ENCODE measurements at regions of chr2 and their contacts with region 1.

Region 1: DNA sequence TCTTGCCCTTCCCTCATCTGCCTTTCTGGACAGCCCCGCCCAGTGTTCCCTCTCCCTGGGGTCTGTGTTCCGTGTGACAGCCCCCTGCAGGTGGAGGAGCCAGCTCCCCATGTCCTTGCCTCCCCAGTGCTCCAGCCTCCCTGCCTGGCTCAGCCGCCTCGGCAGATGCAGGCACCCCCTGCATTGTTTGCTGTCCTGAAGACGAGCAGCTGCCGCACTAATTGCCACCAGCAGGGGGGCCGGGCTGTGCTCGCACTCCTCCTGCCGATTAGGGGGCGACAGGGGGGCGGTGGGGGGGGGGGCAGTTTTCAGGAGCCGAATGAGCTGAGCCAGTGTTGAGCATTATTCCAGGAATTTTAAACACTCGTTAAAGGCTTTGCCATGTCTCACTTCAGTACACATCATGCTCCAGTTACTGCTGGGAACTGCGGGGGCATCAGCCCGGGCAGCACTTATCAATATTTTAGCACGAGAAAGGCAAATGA is 23.3 kb downstream of the SIX3 start:
- DNase-seq: peak in 2 of 4 donors; percentile 40 to 48
- ATAC-seq: no peak
- H3K4me3 ChIP-seq: no peak overlapping the region
- H3K27ac ChIP-seq: no peak overlapping the region
- H3K4me1 ChIP-seq: no peaks in the 10 kb centered on the region
- H3K27me3 ChIP-seq: no peaks in the 10 kb centered on the region
- CTCF ChIP-seq: no peak
- POLR2A ChIP-seq: no peak

Region 2: DNA sequence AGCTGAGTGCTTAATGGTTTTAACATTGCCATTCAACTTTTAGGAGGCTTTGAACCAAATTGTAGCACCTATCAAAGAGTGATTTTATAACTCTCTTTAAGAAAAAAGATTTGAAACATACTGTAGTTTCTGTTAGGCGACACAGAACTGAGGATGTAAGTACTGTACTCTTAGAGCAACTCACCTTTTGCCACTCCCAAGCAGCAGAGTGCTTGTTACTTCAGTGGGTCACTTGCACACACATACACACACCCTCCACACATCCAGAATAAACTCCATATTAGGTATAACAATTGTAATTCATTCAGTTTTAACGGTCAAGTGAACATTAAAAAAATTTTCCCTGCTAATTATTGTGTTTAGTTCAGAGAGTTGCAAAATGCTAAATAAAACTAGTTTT is 484.7 kb before region 1 on chr2:
- intact Hi-C with region 1: loop called (anchors 10 kb)
- DNase-seq: no peak
- ATAC-seq: no peak
- H3K4me3 ChIP-seq: no peak overlapping the region
- H3K27ac ChIP-seq: no peak overlapping the region
- H3K4me1 ChIP-seq: no peaks in the 10 kb centered on the region
- H3K27me3 ChIP-seq: no peaks in the 10 kb centered on the region
- CTCF ChIP-seq: no peak
- POLR2A ChIP-seq: no peak

Region 3: DNA sequence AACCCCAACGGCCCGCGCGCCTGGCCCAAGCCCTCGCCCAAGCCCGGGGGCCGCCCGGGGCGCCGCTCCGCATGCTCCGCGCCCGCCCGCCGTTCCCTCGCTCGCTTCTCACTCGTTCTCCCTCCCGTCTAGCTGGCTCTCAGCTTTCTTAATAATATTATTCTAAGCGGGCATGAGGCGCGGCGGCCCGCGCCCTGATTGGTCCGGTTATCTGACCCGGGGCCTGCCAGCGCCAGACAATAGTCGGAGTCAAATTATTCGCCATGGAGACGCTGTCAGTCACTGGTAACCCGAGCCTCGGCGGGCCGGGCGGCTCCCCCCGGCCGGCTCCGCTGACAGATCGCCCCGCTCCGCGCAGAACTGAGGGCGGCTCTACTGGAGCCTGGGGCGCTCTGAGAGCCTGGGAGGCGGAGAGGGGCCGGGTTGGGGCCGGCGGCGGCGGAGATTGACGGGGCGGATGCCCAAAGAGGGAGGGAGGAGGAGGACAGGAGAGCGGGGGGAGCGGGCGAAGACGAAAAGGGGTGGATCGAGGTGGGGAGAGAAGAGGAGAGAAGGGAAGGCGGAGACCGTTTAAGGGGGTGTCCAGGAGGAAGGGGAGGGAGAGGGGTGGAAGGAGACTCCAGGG is 44.6 kb after region 1 on chr2 and contains the start of gene SIX2:
- intact Hi-C with region 1: no loop called
- DNase-seq: peak; percentile 95 to 98 (median 96)
- ATAC-seq: peak; percentile 89
- H3K4me3 ChIP-seq: peak within 1 kb of the TSS; percentile 2 to 31
- H3K27ac ChIP-seq: peak within 1 kb of the TSS; percentile 18 to 81 (median 77)
- H3K4me1 ChIP-seq: peaks cover 62% of the 10 kb centered on the region
- H3K27me3 ChIP-seq: peaks cover 0 to 18% of the 10 kb centered on the region in 2 donors
- CTCF ChIP-seq: no peak
- POLR2A ChIP-seq: peak; percentile 66 to 75 (median 69)
- total RNA-seq, gene SIX2: 2.3 to 5.2 TPM